AG04450 (cell line): ENCODE measurements at regions of chr10 and their contacts with region 1.

Region 1: DNA sequence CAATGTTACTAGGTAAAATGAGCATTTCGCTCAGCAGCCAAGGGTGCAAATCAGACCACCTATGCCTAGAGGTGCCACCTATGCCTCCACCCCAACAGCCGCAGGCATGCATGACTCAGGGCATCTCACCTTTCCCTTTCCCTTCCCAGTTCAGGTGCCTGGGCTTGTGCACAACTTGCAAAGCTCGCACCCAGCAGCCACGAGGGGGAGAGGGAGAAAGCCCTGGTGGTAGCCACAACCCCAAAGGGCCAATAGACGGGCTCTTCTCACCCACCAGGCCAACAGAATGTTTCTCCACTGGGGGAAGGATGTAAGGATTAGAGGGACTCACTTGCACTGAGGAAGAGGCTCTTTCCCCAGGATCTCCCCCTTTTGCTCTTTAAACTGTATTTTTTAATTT is 462.3 kb upstream of the PCDH15 start:
- DNase-seq: no peak
- H3K4me3 ChIP-seq: no peak overlapping the region
- H3K27ac ChIP-seq: no peak overlapping the region
- H3K27me3 ChIP-seq: no peaks in the 10 kb centered on the region
- CTCF ChIP-seq: no peak

Region 2: GRCh38 chr10:55091691-55092328 is 171.5 kb before region 1 on chr10:
- CTCF ChIA-PET with region 1: interaction called, 15 read pairs
- POLR2A ChIA-PET with region 1: no interaction called
- DNase-seq: no peak
- H3K4me3 ChIP-seq: no peak overlapping the region
- H3K27ac ChIP-seq: no peak overlapping the region
- H3K27me3 ChIP-seq: no peaks in the 10 kb centered on the region
- CTCF ChIP-seq: peak; percentile 89